ENCODE measurements at regions of chr11 and their contacts with region 1.

Region 1: DNA sequence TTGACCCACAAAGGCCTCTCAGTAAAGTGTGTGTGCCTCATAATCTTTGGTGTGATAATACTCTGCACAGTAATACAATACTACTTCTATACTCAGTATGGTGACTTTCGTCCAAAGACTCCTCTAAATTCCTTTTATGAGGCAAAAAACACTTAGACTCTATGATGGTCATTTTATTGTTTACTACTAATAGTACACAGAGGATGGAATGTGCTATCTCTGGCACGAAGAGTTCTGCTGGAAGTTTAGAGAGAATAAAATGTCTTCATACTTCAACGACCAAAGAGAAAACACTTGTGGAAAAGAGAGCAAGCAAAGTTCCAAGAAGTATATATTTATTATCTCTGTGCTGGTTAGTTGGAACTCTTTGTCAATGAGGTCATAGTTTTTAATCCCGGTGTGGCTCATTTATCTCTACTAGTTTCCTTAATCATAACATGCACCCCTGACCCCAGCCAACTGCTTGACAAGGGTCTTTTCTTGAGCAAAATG is 7.5 kb upstream of the CSTF3 start:
- DNase-seq: no peak
- ATAC-seq: no peak
- H3K4me3 ChIP-seq: no peak overlapping the region
- H3K27ac ChIP-seq: no peak overlapping the region
- H3K4me1 ChIP-seq: peaks cover 8% of the 10 kb centered on the region
- H3K27me3 ChIP-seq: no peaks in the 10 kb centered on the region
- CTCF ChIP-seq: no peak

Region 2: DNA sequence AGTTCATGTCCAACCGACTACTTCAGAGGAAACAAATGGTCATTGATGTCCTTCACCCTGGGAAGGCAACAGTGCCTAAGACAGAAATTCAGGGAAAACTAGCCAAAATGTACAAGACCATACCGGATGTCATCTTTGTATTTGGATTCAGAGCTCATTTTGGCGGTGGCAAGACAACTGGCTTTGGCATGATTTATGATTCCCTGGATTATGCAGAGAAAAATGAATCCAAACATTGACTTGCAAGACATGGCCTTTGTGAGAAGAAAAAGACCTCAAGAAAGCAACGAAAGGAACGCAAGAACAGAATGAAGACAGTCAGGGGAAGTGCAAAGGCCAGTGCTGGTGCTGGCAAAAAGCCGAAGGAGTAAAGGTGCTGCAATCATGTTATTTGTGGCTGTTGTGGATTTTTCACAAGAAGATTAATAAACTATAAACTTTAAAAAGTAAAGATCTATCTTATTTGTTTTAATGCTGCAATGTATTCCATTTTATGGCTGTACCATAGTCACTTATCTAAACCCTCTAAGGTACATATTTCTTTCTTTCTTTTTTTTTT is 68.4 kb after region 1 on chr11:
- intact Hi-C with region 1: no loop called
- DNase-seq: no peak
- ATAC-seq: no peak
- H3K4me3 ChIP-seq: no peak overlapping the region
- H3K27ac ChIP-seq: no peak overlapping the region
- H3K4me1 ChIP-seq: no peaks in the 10 kb centered on the region
- H3K27me3 ChIP-seq: no peaks in the 10 kb centered on the region
- CTCF ChIP-seq: no peak

Region 3: DNA sequence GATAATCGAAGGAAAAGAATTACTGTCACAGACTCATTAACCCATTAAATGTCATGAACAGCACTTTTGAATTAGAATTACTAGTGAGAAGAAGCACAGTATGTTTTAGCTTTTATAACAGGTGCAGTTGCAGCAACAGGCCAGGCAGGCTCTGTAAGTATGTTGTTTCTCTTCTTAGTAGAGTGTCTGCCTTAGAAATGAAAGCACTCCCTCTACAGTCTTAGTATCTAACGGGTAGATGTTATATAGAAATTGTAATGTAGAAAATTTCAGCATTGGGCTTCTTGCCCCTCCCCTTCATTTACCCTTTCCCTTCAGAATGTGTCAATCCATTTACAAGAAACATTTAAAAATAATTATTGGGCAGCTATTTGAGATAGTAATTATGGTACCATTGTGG is 175.9 kb after region 1 on chr11:
- intact Hi-C with region 1: loop called in 1 of 2 experiments (anchors 5 kb)
- DNase-seq: no peak
- ATAC-seq: peak; percentile 56 to 84 (median 62)
- H3K4me3 ChIP-seq: no peak overlapping the region
- H3K27ac ChIP-seq: peak overlapping the region; percentile 8
- H3K4me1 ChIP-seq: no peaks in the 10 kb centered on the region
- H3K27me3 ChIP-seq: no peaks in the 10 kb centered on the region
- CTCF ChIP-seq: peak; percentile 22